Activated CD4-positive, alpha-beta T cell treated with anti-CD3 and anti-CD28 coated beads for 36 hours (primary cell): ENCODE measurements at regions of chr5 and their contacts with region 1.

Region 1: DNA sequence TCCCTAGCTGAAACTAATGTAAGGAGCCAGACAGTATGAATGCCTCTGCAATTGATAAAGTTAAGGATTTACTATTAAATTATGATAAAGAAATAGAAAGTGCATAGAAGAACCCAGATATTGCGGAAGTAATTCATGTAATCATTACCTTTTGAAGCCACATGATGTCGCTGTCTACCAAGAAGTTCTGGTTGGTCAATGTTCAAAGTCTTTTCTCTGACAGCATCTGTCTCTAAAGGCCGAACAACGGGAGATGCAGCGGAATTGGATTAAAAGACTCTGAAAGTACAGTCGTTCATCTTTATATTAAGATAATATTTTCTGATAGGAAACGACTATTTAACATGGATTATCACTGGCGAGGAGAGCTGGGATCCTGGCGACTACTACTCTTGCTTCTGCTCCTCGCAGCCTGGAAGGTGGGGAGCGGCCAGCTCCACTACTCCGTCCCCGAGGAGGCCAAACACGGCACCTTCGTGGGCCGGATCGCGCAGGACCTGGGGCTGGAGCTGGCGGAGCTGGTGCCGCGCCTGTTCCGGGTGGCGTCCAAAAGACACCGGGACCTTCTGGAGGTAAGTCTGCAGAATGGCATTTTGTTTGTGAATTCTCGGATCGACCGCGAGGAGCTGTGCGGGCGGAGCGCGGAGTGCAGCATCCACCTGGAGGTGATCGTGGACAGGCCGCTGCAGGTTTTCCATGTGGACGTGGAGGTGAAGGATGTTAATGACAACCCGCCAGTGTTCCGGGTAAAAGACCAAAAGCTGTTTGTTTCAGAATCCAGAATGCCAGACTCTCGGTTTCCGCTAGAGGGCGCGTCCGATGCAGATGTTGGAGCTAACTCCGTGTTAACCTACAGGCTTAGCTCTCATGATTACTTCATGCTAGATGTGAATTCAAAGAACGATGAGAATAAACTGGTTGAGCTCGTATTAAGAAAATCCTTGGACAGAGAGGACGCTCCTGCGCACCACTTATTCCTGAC is at the start of gene PCDHA8:
- DNase-seq: peak; percentile 49
- ATAC-seq: no peak
- H3K4me3 Mint-ChIP-seq: no peak within 1 kb of the TSS
- H3K27ac Mint-ChIP-seq: no peak within 1 kb of the TSS
- H3K4me1 Mint-ChIP-seq: no peaks in the 10 kb centered on the region
- H3K27me3 Mint-ChIP-seq: peaks cover 22% of the 10 kb centered on the region
- total RNA-seq, gene PCDHA8: not detected

Region 2: GRCh38 chr5:140800816-140801493 is 40.3 kb before region 1 on chr5 and contains the start of gene PCDHA3:
- CTCF ChIA-PET with region 1: no interaction called
- POLR2A ChIA-PET with region 1: no interaction called
- intact Hi-C with region 1: loop called in 1 of 2 experiments (anchors 5 kb)
- DNase-seq: no peak
- ATAC-seq: no peak
- H3K4me3 Mint-ChIP-seq: no peak within 1 kb of the TSS
- H3K27ac Mint-ChIP-seq: no peak within 1 kb of the TSS
- H3K4me1 Mint-ChIP-seq: no peaks in the 10 kb centered on the region
- H3K27me3 Mint-ChIP-seq: peaks cover 26% of the 10 kb centered on the region
- total RNA-seq, gene PCDHA3: not detected

Region 3: DNA sequence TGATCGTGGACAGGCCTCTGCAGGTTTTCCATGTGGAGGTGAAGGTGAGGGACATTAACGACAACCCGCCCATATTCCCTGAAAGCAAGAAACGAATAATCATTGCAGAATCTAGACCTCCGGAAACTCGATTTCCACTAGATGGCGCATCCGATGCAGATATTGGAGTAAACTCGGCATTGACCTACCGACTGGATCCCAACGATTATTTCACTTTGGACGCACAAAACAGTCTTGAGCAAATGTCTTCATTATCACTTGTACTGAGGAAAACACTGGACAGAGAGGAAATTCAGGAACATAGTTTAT is 41.3 kb after region 1 on chr5:
- CTCF ChIA-PET with region 1: interaction called, 4 read pairs
- POLR2A ChIA-PET with region 1: no interaction called
- intact Hi-C with region 1: loop called (anchors 5 to 10 kb)
- DNase-seq: no peak
- ATAC-seq: no peak
- H3K4me3 Mint-ChIP-seq: no peak overlapping the region
- H3K27ac Mint-ChIP-seq: no peak overlapping the region
- H3K4me1 Mint-ChIP-seq: no peaks in the 10 kb centered on the region
- H3K27me3 Mint-ChIP-seq: peaks cover 34% of the 10 kb centered on the region